Activated naive CD8-positive, alpha-beta T cell treated with anti-CD3 and anti-CD28 coated beads, Interleukin-2, amount 10 ng/mL, durations not matched to agents 7 days and 5 days (primary cell): ENCODE measurements at regions of chr20 and their contacts with region 1.

Region 1: GRCh38 chr20:48828022-48828743 is 384 bp upstream of the PREX1 start:
- DNase-seq: peak; percentile 96
- ATAC-seq: peak; percentile 54
- H3K4me3 Mint-ChIP-seq: peak overlapping the region; percentile 85
- H3K27ac Mint-ChIP-seq: peak overlapping the region; percentile 83
- H3K4me1 Mint-ChIP-seq: peaks cover 24% of the 10 kb centered on the region
- H3K27me3 Mint-ChIP-seq: no peaks in the 10 kb centered on the region

Region 2: GRCh38 chr20:48723308-48724264 is 104.6 kb before region 1 on chr20:
- POLR2A ChIA-PET with region 1: interaction called, 31 read pairs
- DNase-seq: no peak
- ATAC-seq: no peak
- H3K4me3 Mint-ChIP-seq: no peak overlapping the region
- H3K27ac Mint-ChIP-seq: peak overlapping the region; percentile 91
- H3K4me1 Mint-ChIP-seq: peaks cover 63% of the 10 kb centered on the region
- H3K27me3 Mint-ChIP-seq: no peaks in the 10 kb centered on the region

Region 3: DNA sequence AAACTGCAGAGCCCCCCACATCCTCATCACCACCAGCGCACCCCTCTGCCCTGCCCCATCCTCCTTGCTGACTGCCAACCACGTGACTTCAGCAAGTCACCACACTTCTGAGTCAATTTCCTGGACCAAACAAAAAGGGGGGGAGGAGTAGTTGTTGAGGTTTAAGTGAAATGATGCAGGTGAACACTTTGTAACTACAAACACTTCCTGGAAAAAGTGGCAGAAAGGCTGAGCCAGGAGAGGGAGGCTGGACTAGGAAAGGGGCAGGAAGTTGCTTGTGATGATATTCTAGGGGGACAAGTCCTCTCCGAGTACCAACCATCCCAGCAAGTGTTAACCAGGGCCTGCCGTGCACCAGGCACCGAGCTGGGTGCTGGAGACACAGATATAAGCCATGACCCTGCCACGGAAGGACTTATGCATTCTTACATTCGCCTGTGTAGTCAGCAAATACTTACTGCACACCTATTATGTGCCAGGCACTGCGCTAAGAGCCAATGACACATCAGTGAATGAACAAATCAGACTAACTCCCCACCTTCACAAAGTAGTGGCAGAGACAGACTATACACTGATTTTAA is 67.7 kb before region 1 on chr20:
- POLR2A ChIA-PET with region 1: interaction called, 10 read pairs
- DNase-seq: peak; percentile 67
- ATAC-seq: peak; percentile 77
- H3K4me3 Mint-ChIP-seq: peak overlapping the region; percentile 77
- H3K27ac Mint-ChIP-seq: peak overlapping the region; percentile 96
- H3K4me1 Mint-ChIP-seq: peaks cover 75% of the 10 kb centered on the region
- H3K27me3 Mint-ChIP-seq: no peaks in the 10 kb centered on the region

Region 4: GRCh38 chr20:48774674-48775559 is 53.3 kb before region 1 on chr20:
- POLR2A ChIA-PET with region 1: no interaction called
- DNase-seq: no peak
- ATAC-seq: no peak
- H3K4me3 Mint-ChIP-seq: peak overlapping the region; percentile 37
- H3K27ac Mint-ChIP-seq: peak overlapping the region; percentile 59
- H3K4me1 Mint-ChIP-seq: peaks cover 52% of the 10 kb centered on the region
- H3K27me3 Mint-ChIP-seq: no peaks in the 10 kb centered on the region

Region 5: DNA sequence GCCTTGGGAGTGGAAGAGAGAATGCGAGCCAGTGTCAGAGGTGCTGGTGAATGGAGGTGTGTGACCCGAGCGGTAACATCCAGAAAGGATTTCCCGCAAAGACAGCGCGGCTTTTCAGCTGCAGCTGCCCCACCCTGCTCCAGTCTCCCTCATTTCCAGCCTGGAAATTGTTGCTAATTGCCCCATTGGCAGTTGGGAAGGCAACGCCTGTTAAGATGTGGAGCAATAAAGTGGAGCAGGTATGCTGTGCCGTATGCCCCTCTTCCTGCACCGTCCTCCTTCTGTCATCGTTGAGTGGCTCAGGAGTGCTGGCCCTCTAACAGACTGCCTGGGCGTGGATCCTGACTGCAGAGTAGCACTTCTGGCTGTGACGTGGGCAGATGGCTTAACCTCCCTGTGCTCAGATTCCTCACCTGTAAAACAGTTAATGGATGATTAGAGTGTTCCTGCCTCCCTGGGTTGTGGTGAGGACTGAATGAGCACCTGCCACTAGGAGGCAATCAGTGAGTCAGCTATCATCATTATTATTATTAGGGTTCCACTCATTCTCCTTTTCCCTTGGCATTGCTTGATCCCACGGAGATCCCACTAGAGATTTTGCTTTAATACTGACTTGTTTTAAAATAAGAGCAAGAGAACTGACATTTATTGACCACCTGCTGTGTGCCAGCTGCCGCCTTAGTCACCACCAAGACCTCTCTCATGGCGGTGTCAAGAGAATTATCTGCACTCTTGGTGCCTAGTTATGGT is 105.0 kb after region 1 on chr20:
- POLR2A ChIA-PET with region 1: no interaction called
- DNase-seq: no peak
- ATAC-seq: no peak
- H3K4me3 Mint-ChIP-seq: no peak overlapping the region
- H3K27ac Mint-ChIP-seq: no peak overlapping the region
- H3K4me1 Mint-ChIP-seq: peaks cover 7% of the 10 kb centered on the region
- H3K27me3 Mint-ChIP-seq: no peaks in the 10 kb centered on the region